Calu3 (cell line): ENCODE measurements at regions of chr10 and their contacts with region 1.

Region 1: DNA sequence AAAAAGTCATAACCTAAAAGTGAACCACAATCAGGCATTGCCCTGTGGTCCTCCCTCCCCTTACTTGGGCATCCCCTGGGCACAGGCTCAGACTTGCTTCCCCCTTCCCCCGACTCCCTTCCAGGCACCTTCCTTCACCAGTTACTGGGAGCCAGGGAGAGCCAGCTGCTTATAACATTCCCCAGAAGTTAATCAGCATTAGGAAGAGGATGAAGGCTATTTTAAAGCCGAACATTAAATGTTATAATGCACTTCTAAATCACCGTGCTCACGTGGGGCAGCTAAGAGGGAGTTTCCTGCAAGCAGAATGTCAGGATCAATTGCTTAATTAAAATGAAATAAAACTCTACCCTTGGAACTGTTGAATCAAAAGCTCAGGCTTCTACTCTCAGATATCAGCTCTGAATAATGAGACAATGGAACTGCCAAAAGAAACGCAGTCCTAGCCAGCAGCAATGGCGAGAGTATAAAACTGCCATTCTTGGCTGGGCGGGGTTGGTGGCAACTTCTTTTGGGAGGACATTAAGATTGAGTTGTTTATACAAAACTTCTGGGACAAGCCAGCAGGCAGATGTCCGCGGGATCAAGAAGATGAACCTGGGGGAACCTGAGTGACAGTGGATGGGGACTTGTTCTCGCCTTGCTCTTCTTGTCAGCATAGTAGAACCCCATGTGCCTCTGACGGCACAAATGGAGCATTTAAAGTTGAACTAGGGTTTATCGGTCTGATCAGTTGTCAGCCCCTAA is 169.6 kb downstream of the FANK1 start:
- DNase-seq: no peak
- H3K4me3 Mint-ChIP-seq: no peak overlapping the region
- H3K27ac Mint-ChIP-seq: no peak overlapping the region
- H3K4me1 Mint-ChIP-seq: peaks cover 21% of the 10 kb centered on the region
- H3K27me3 Mint-ChIP-seq: no peaks in the 10 kb centered on the region
- CTCF ChIP-seq: no peak

Region 2: GRCh38 chr10:125967533-125967932 is 98.4 kb before region 1 on chr10:
- CTCF ChIA-PET with region 1: no interaction called
- intact Hi-C with region 1: no loop called
- DNase-seq: no peak
- H3K4me3 Mint-ChIP-seq: no peak overlapping the region
- H3K27ac Mint-ChIP-seq: no peak overlapping the region
- H3K4me1 Mint-ChIP-seq: no peaks in the 10 kb centered on the region
- H3K27me3 Mint-ChIP-seq: no peaks in the 10 kb centered on the region
- CTCF ChIP-seq: no peak

Region 3: GRCh38 chr10:126017961-126018560 is 47.9 kb before region 1 on chr10:
- CTCF ChIA-PET with region 1: no interaction called
- intact Hi-C with region 1: loop called (anchors 2 kb)
- DNase-seq: no peak
- H3K4me3 Mint-ChIP-seq: no peak overlapping the region
- H3K27ac Mint-ChIP-seq: no peak overlapping the region
- H3K4me1 Mint-ChIP-seq: peaks cover 34% of the 10 kb centered on the region
- H3K27me3 Mint-ChIP-seq: no peaks in the 10 kb centered on the region
- CTCF ChIP-seq: no peak